A673 (cell line): ENCODE measurements at regions of chr7 and their contacts with region 1.

Region 1: DNA sequence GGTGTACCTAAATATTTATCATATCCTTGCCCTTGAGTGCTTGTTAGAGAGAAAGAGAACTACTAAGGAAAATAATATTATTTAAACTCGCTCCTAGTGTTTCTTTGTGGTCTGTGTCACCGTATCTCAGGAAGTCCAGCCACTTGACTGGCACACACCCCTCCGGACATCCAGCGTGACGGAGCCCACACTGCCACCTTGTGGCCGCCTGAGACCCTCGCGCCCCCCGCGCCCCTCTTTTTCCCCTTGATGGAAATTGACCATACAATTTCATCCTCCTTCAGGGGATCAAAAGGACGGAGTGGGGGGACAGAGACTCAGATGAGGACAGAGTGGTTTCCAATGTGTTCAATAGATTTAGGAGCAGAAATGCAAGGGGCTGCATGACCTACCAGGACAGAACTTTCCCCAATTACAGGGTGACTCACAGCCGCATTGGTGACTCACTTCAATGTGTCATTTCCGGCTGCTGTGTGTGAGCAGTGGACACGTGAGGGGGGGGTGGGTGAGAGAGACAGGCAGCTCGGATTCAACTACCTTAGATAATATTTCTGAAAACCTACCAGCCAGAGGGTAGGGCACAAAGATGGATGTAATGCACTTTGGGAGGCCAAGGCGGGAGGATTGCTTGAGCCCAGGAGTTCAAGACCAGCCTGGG is 11.4 kb downstream of the SERPINE1 start:
- DNase-seq: peak; percentile 97
- H3K4me3 ChIP-seq: peak overlapping the region; percentile 20
- H3K27ac ChIP-seq: peak overlapping the region; percentile 70
- H3K4me1 ChIP-seq: peaks cover 43% of the 10 kb centered on the region
- H3K27me3 ChIP-seq: no peaks in the 10 kb centered on the region
- CTCF ChIP-seq: peak; percentile 93

Region 2: DNA sequence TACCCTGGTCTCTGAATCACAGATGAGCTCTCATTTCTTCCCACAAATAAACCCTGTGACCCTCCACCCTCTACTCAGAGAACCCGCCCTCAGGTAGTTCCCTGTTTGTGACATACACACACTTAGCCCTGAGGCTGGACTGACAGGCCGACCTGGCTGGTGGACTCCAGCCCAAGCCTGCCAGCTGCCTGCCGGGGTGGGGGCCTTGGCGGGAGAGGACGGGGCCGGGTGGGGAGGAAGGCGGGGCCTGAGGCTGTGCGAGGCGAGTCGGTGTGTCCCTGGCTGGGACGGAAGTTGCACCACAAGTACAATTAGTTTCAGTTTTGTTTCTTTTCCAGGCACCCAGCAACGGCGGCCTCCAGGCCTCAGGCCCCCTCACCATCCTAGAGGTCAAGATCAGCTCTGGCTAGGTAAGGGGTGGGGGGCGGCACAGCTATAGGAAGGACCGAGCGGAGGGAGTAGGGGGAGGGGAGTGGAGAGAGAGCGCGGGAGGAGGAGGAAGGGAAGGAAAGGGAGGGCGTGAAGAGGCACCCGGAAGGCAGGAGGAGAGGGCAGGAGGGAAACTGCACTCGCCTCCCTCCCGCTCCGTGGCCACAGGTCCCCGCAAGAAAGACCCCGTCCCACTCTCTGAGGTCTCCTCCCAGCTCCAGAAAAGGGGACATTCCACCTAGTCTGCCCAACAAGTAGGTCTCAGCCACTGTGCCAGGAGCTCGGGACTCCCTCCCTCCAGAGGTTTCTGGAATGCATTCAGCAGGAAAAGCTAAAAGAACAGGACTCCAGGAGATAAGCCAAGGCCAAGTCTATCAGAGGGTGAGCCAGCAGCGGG is 53.0 kb before region 1 on chr7 and contains the start of gene TRIM56:
- CTCF ChIA-PET with region 1: interaction called, 3 read pairs
- POLR2A ChIA-PET with region 1: no interaction called
- intact Hi-C with region 1: loop called (anchors 10 kb)
- DNase-seq: peak; percentile 78
- H3K4me3 ChIP-seq: peak within 1 kb of the TSS; percentile 75
- H3K27ac ChIP-seq: peak within 1 kb of the TSS; percentile 90
- H3K4me1 ChIP-seq: peaks cover 11% of the 10 kb centered on the region
- H3K27me3 ChIP-seq: no peaks in the 10 kb centered on the region
- CTCF ChIP-seq: no peak
- total RNA-seq, gene TRIM56: 27.5 and 32.3 TPM in 2 replicates

Region 3: GRCh38 chr7:101099969-101100781 is 38.2 kb before region 1 on chr7:
- CTCF ChIA-PET with region 1: no interaction called
- POLR2A ChIA-PET with region 1: no interaction called
- intact Hi-C with region 1: loop called (anchors 2 kb)
- DNase-seq: peak; percentile 96
- H3K4me3 ChIP-seq: no peak overlapping the region
- H3K27ac ChIP-seq: peak overlapping the region; percentile 65
- H3K4me1 ChIP-seq: peaks cover 20% of the 10 kb centered on the region
- H3K27me3 ChIP-seq: no peaks in the 10 kb centered on the region
- CTCF ChIP-seq: no peak

Region 4: GRCh38 chr7:101125989-101126650 is 12.2 kb before region 1 on chr7:
- CTCF ChIA-PET with region 1: interaction called, 12 read pairs
- POLR2A ChIA-PET with region 1: interaction called, 10 read pairs
- intact Hi-C with region 1: no loop called
- DNase-seq: no peak
- H3K4me3 ChIP-seq: no peak overlapping the region
- H3K27ac ChIP-seq: no peak overlapping the region
- H3K4me1 ChIP-seq: peaks cover 18% of the 10 kb centered on the region
- H3K27me3 ChIP-seq: no peaks in the 10 kb centered on the region
- CTCF ChIP-seq: no peak

Region 5: GRCh38 chr7:101186844-101187428 is 48.6 kb after region 1 on chr7:
- CTCF ChIA-PET with region 1: interaction called, 55 read pairs
- POLR2A ChIA-PET with region 1: interaction called, 8 read pairs
- intact Hi-C with region 1: no loop called
- DNase-seq: no peak
- H3K4me3 ChIP-seq: no peak overlapping the region
- H3K27ac ChIP-seq: no peak overlapping the region
- H3K4me1 ChIP-seq: no peaks in the 10 kb centered on the region
- H3K27me3 ChIP-seq: no peaks in the 10 kb centered on the region
- CTCF ChIP-seq: no peak

Region 6: GRCh38 chr7:101244375-101245146 is 106.2 kb after region 1 on chr7 and contains the start of gene FIS1:
- CTCF ChIA-PET with region 1: interaction called, 19 read pairs
- POLR2A ChIA-PET with region 1: no interaction called
- intact Hi-C with region 1: no loop called
- DNase-seq: peak; percentile 94
- H3K4me3 ChIP-seq: peak within 1 kb of the TSS; percentile 86
- H3K27ac ChIP-seq: peak within 1 kb of the TSS; percentile 87
- H3K4me1 ChIP-seq: no peaks in the 10 kb centered on the region
- H3K27me3 ChIP-seq: no peaks in the 10 kb centered on the region
- CTCF ChIP-seq: peak; percentile 92
- total RNA-seq, gene FIS1: 74.1 and 79.6 TPM in 2 replicates

Region 7: GRCh38 chr7:101287032-101287431 is 148.7 kb after region 1 on chr7:
- CTCF ChIA-PET with region 1: interaction called, 39 read pairs
- POLR2A ChIA-PET with region 1: no interaction called
- intact Hi-C with region 1: no loop called
- DNase-seq: no peak
- H3K4me3 ChIP-seq: no peak overlapping the region
- H3K27ac ChIP-seq: no peak overlapping the region
- H3K4me1 ChIP-seq: no peaks in the 10 kb centered on the region
- H3K27me3 ChIP-seq: peaks cover 7% of the 10 kb centered on the region
- CTCF ChIP-seq: no peak